ENCODE measurements at regions of chr1 and their contacts with region 1.

Region 1: GRCh38 chr1:201275041-201275676 is 8.1 kb upstream of the PKP1 start:
- DNase-seq: peak; percentile 81
- H3K4me3 ChIP-seq: no peak overlapping the region
- H3K27ac ChIP-seq: peak overlapping the region in 1 of 4 donors; percentile 8
- H3K4me1 ChIP-seq: peaks cover 4 to 13% (median 10%) of the 10 kb centered on the region in 4 donors
- H3K27me3 ChIP-seq: peaks cover 6% of the 10 kb centered on the region
- CTCF ChIP-seq: no peak
- EP300 ChIP-seq: no peak
- POLR2A ChIP-seq: no peak

Region 2: GRCh38 chr1:201309426-201309825 is 34.3 kb after region 1 on chr1:
- in situ Hi-C with region 1: no loop called
- intact Hi-C with region 1: no loop called
- DNase-seq: peak; percentile 82
- H3K4me3 ChIP-seq: no peak overlapping the region
- H3K27ac ChIP-seq: no peak overlapping the region
- H3K4me1 ChIP-seq: peaks cover 8 to 28% (median 24%) of the 10 kb centered on the region in 4 donors
- H3K27me3 ChIP-seq: no peaks in the 10 kb centered on the region
- CTCF ChIP-seq: peak in 2 of 5 experiments; percentile 8 to 11
- EP300 ChIP-seq: no peak
- POLR2A ChIP-seq: no peak

Region 3: DNA sequence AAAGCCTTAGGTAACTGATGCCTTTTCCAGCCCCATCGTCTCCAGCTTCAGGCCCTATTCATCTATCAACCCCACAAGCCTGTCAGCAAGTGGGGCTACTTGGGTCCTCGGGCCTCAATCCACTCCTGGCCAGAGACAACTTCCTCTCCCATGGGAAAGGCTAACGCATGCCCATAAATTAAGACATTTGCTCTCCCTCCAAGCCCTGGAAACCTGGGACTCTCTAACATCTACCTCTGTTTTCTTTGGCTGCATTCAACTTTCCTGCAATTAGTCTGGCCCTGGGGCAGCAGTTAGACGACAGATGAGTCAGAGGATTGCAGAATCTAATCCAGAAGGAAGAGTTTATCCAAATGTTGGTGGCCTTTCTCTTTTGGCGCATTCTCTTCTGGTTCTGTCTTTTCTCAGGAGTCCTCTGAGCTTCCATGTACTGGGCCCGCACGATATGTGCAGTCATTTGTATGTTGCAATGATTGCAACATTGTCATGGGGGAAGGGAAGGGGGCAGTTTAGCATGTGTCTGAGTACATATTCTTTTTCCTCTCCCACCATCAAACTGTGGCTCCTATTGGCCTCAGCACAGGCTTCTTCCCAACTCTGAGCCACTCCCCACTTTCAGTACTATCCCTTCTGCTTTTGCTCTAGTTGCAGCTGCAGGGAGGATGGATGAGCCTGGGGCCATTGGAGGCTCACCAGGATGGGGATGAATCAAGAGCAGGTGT is 318.2 kb after region 1 on chr1:
- in situ Hi-C with region 1: no loop called
- intact Hi-C with region 1: no loop called
- DNase-seq: peak; percentile 44
- H3K4me3 ChIP-seq: no peak overlapping the region
- H3K27ac ChIP-seq: peak overlapping the region; percentile 61 to 80 (median 69)
- H3K4me1 ChIP-seq: peaks cover 2 to 22% (median 14%) of the 10 kb centered on the region in 4 donors
- H3K27me3 ChIP-seq: no peaks in the 10 kb centered on the region
- CTCF ChIP-seq: no peak
- EP300 ChIP-seq: peak; percentile 41
- POLR2A ChIP-seq: no peak

Region 4: DNA sequence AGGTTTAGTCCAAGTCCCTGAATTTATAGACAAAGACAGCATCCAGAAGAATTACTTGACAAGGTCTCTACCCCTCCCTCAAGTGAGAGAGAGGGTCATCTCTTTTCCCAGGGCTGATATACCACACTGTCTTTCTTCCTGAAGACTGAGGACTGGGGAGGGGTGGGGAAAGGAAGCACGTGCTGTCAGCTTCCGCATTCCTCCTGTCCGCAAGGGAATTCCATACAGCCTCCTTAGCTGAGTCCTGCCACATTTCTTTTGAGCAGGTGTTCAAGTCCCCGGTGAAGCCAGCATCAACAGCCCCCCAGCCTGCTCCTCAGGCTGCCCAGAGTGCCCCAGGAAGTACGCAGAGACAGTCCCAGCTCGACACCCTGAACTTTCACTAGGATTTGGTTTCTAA is 1569.8 kb after region 1 on chr1:
- in situ Hi-C with region 1: no loop called
- intact Hi-C with region 1: loop called (anchors 5 kb)
- DNase-seq: no peak
- H3K4me3 ChIP-seq: no peak overlapping the region
- H3K27ac ChIP-seq: no peak overlapping the region
- H3K4me1 ChIP-seq: no peaks in the 10 kb centered on the region
- H3K27me3 ChIP-seq: no peaks in the 10 kb centered on the region
- CTCF ChIP-seq: no peak
- EP300 ChIP-seq: no peak
- POLR2A ChIP-seq: no peak

Measured in transverse colon (tissue), 4 donors.